B cell (primary cell): ENCODE measurements at regions of chr7 and their contacts with region 1.

Region 1: GRCh38 chr7:25093268-25093826 is 31.7 kb downstream of the CYCS start:
- DNase-seq: peak; percentile 77
- ATAC-seq: peak; percentile 87
- H3K4me3 ChIP-seq: no peak overlapping the region
- H3K4me3 Mint-ChIP-seq: no peak overlapping the region
- H3K27ac ChIP-seq: no peak overlapping the region
- H3K27ac Mint-ChIP-seq: no peak overlapping the region
- H3K4me1 ChIP-seq: peaks cover 0 to 7% of the 10 kb centered on the region in 2 donors
- H3K4me1 Mint-ChIP-seq: peaks cover 6% of the 10 kb centered on the region
- H3K27me3 ChIP-seq: no peaks in the 10 kb centered on the region
- H3K27me3 Mint-ChIP-seq: no peaks in the 10 kb centered on the region
- CTCF ChIP-seq: peak; percentile 75

Region 2: DNA sequence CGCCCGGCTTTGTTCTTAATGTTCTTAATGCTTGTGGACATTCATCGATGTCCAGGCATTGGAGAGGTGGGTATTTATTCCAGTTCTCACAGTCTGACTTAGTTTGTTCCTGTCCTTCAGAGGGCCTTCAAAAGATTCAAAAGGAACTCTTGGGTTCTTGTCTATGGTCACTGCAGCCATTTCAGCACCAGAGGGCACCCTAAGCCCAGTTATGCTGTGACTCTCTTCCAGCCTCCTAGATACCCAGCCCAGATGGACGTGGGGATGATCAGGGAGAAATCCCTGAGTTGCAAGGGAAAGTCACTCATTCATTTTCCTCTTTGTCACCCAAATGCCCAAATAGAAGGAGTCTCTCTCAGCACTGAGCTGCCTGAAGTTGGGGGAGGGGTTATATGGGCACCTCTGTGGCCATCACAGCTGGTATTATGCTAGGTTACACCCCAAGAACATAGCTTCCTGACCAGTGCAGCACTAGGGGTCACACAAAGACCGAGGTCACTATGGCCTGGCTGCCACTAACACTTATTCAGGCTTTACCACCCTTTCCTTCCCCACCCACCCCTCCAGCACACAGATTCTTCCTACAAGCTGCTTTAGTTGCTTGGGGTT is 1522.7 kb before region 1 on chr7:
- CTCF ChIA-PET with region 1: no interaction called
- POLR2A ChIA-PET with region 1: no interaction called
- intact Hi-C with region 1: loop called (anchors 10 kb)
- DNase-seq: peak; percentile 77
- ATAC-seq: peak; percentile 91
- H3K4me3 ChIP-seq: no peak overlapping the region
- H3K4me3 Mint-ChIP-seq: peak overlapping the region; percentile 57
- H3K27ac ChIP-seq: no peak overlapping the region
- H3K27ac Mint-ChIP-seq: no peak overlapping the region
- H3K4me1 ChIP-seq: no peaks in the 10 kb centered on the region
- H3K4me1 Mint-ChIP-seq: peaks cover 3% of the 10 kb centered on the region
- H3K27me3 ChIP-seq: peaks cover 0 to 4% (median 0%) of the 10 kb centered on the region in 4 experiments
- H3K27me3 Mint-ChIP-seq: peaks cover 10% of the 10 kb centered on the region
- CTCF ChIP-seq: peak; percentile 84

Region 3: GRCh38 chr7:24290004-24290641 is 803.2 kb before region 1 on chr7:
- CTCF ChIA-PET with region 1: interaction called, 5 read pairs
- POLR2A ChIA-PET with region 1: no interaction called
- intact Hi-C with region 1: loop called (anchors 10 kb)
- DNase-seq: peak; percentile 64
- ATAC-seq: peak; percentile 86
- H3K4me3 ChIP-seq: no peak overlapping the region
- H3K4me3 Mint-ChIP-seq: no peak overlapping the region
- H3K27ac ChIP-seq: no peak overlapping the region
- H3K27ac Mint-ChIP-seq: no peak overlapping the region
- H3K4me1 ChIP-seq: peaks cover 8 to 10% of the 10 kb centered on the region in 2 donors
- H3K4me1 Mint-ChIP-seq: peaks cover 12% of the 10 kb centered on the region
- H3K27me3 ChIP-seq: peaks cover 0 to 19% (median 12%) of the 10 kb centered on the region in 4 experiments
- H3K27me3 Mint-ChIP-seq: peaks cover 40% of the 10 kb centered on the region
- CTCF ChIP-seq: peak; percentile 41

Region 4: DNA sequence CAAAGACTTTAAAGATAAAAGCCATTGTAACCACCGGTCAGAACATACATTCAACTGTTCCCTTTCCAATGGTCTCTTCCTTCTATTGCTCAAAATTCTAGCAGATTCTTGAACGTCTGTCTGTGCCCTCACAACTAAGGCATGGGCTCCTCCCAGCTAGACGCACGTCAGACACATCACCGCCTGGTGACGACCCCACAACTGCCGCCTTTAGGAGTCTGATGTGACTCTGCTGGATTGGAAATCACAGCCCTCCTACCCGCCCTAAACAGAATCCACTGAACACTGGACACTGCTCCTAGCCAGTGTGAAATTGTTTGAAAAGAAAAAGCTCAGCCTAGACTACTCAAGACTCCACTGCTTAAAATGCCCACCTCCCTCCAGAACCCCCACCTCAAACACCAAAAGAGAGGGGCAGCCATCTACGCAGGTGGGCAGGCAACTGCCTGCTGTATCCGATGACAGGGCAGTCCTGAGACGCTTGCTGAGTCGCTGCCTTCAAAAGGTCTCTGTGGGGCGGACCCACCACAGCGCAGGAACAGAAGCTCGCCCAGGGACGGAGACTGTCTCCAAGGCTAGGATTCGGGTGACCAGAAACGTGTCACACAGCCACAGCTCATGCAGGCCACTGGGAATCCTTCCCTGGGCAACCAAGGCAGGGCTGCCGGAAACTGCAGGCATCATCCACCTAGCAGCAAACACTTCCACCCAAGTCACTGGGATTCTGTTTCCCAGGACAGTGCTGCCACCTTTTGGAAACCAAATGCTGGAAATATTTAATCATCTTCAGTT is 370.8 kb before region 1 on chr7:
- CTCF ChIA-PET with region 1: interaction called, 4 read pairs
- POLR2A ChIA-PET with region 1: no interaction called
- intact Hi-C with region 1: loop called (anchors 10 kb)
- DNase-seq: no peak
- ATAC-seq: no peak
- H3K4me3 ChIP-seq: no peak overlapping the region
- H3K4me3 Mint-ChIP-seq: no peak overlapping the region
- H3K27ac ChIP-seq: no peak overlapping the region
- H3K27ac Mint-ChIP-seq: peak overlapping the region; percentile 44
- H3K4me1 ChIP-seq: peaks cover 36 to 51% of the 10 kb centered on the region in 2 donors
- H3K4me1 Mint-ChIP-seq: peaks cover 78% of the 10 kb centered on the region
- H3K27me3 ChIP-seq: no peaks in the 10 kb centered on the region
- H3K27me3 Mint-ChIP-seq: no peaks in the 10 kb centered on the region
- CTCF ChIP-seq: no peak

Region 5: GRCh38 chr7:24948739-24949138 is 144.6 kb before region 1 on chr7:
- CTCF ChIA-PET with region 1: no interaction called
- POLR2A ChIA-PET with region 1: no interaction called
- intact Hi-C with region 1: no loop called
- DNase-seq: no peak
- ATAC-seq: no peak
- H3K4me3 ChIP-seq: no peak overlapping the region
- H3K4me3 Mint-ChIP-seq: peak overlapping the region; percentile 2
- H3K27ac ChIP-seq: no peak overlapping the region
- H3K27ac Mint-ChIP-seq: no peak overlapping the region
- H3K4me1 ChIP-seq: peaks cover 0 to 4% of the 10 kb centered on the region in 2 donors
- H3K4me1 Mint-ChIP-seq: peaks cover 35% of the 10 kb centered on the region
- H3K27me3 ChIP-seq: no peaks in the 10 kb centered on the region
- H3K27me3 Mint-ChIP-seq: no peaks in the 10 kb centered on the region
- CTCF ChIP-seq: no peak

Region 6: GRCh38 chr7:25069900-25070443 is 23.4 kb before region 1 on chr7:
- CTCF ChIA-PET with region 1: interaction called, 25 read pairs
- POLR2A ChIA-PET with region 1: no interaction called
- intact Hi-C with region 1: no loop called
- DNase-seq: peak; percentile 76
- ATAC-seq: peak; percentile 51
- H3K4me3 ChIP-seq: no peak overlapping the region
- H3K4me3 Mint-ChIP-seq: no peak overlapping the region
- H3K27ac ChIP-seq: no peak overlapping the region
- H3K27ac Mint-ChIP-seq: no peak overlapping the region
- H3K4me1 ChIP-seq: peaks cover 0 to 2% of the 10 kb centered on the region in 2 donors
- H3K4me1 Mint-ChIP-seq: peaks cover 2% of the 10 kb centered on the region
- H3K27me3 ChIP-seq: no peaks in the 10 kb centered on the region
- H3K27me3 Mint-ChIP-seq: no peaks in the 10 kb centered on the region
- CTCF ChIP-seq: peak; percentile 95

Region 7: GRCh38 chr7:25117226-25118047 is 24.1 kb after region 1 on chr7:
- CTCF ChIA-PET with region 1: interaction called, 55 read pairs
- POLR2A ChIA-PET with region 1: no interaction called
- intact Hi-C with region 1: loop called (anchors 2 kb)
- DNase-seq: peak; percentile 81
- ATAC-seq: peak; percentile 89
- H3K4me3 ChIP-seq: peak overlapping the region; percentile 12 to 54 (median 40)
- H3K4me3 Mint-ChIP-seq: peak overlapping the region; percentile 87
- H3K27ac ChIP-seq: peak overlapping the region; percentile 71 to 82
- H3K27ac Mint-ChIP-seq: peak overlapping the region; percentile 97
- H3K4me1 ChIP-seq: peaks cover 27% of the 10 kb centered on the region in 2 donors
- H3K4me1 Mint-ChIP-seq: peaks cover 41% of the 10 kb centered on the region
- H3K27me3 ChIP-seq: no peaks in the 10 kb centered on the region
- H3K27me3 Mint-ChIP-seq: no peaks in the 10 kb centered on the region
- CTCF ChIP-seq: no peak

Region 8: DNA sequence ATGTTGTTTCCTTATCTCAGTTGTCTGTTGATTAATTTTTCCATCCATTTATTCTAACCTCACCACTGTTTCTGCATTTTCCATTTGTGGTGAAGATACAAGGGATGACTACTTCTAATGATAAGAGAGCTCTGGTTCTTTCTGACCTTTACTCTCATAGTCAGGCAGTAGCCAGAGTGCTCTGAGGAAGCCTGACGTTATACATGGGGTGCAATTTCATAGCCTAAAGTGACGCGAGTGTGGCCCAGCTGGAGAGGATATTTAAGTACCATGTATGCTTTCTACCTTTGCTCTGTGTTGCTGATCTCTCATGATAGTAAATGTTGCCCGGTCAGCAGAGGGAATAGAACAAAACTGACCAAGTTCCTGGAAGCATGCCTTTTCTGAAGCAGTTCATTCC is 65.6 kb after region 1 on chr7:
- CTCF ChIA-PET with region 1: interaction called, 13 read pairs
- POLR2A ChIA-PET with region 1: no interaction called
- intact Hi-C with region 1: loop called (anchors 1 kb)
- DNase-seq: no peak
- ATAC-seq: no peak
- H3K4me3 ChIP-seq: no peak overlapping the region
- H3K4me3 Mint-ChIP-seq: no peak overlapping the region
- H3K27ac ChIP-seq: no peak overlapping the region
- H3K27ac Mint-ChIP-seq: no peak overlapping the region
- H3K4me1 ChIP-seq: no peaks in the 10 kb centered on the region
- H3K4me1 Mint-ChIP-seq: peaks cover 1% of the 10 kb centered on the region
- H3K27me3 ChIP-seq: no peaks in the 10 kb centered on the region
- H3K27me3 Mint-ChIP-seq: no peaks in the 10 kb centered on the region
- CTCF ChIP-seq: no peak